CD8-positive, alpha-beta T cell (primary cell): ENCODE measurements at regions of chr20 and their contacts with region 1.

Region 1: DNA sequence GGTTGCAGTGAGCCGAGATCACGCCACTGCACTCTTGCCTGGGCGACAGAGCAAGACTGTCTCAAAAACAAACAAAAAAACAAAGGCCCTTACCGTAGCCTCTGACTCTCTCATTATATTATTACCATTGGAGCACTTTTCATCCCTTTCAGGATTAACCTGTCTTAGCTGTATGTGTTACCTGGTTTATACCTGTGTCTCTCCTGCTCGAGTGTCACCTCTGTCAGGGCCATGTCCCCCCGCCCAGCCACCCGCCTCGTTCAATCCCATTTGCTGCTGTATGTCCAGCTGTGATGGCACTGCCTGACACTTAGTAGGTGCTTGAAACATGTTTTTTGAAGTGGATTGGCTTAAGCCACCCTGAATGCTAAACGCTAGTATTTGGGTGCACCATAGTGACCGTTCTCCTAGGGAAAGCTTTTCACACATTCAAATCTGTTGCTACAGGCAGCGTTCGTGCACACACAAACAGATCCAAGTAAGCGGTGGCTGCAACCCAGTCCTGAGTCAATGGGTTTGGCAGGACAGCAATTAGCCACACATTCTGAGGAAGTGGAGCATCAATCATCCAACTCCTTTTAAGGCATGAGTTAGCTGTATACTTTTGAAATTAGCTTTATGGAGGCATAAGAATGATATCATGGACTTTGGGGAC is 98.9 kb upstream of the ZNF217 start:
- DNase-seq: peak in 1 of 9 experiments; percentile 22
- ATAC-seq: no peak
- H3K4me3 ChIP-seq: peak overlapping the region in 1 of 2 experiments; percentile 16
- H3K4me3 Mint-ChIP-seq: peak overlapping the region; percentile 71
- H3K27ac ChIP-seq: peak overlapping the region in 1 of 2 experiments; percentile 16
- H3K27ac Mint-ChIP-seq: peak overlapping the region; percentile 87
- H3K4me1 ChIP-seq: peaks cover 12% of the 10 kb centered on the region
- H3K4me1 Mint-ChIP-seq: peaks cover 34% of the 10 kb centered on the region
- H3K27me3 ChIP-seq: no peaks in the 10 kb centered on the region
- H3K27me3 Mint-ChIP-seq: no peaks in the 10 kb centered on the region
- CTCF ChIP-seq: no peak

Region 2: GRCh38 chr20:53734006-53734688 is 41.6 kb after region 1 on chr20:
- CTCF ChIA-PET with region 1: no interaction called
- POLR2A ChIA-PET with region 1: no interaction called
- intact Hi-C with region 1: loop called in 1 of 2 experiments (anchors 5 kb)
- DNase-seq: no peak
- ATAC-seq: no peak
- H3K4me3 ChIP-seq: no peak overlapping the region
- H3K4me3 Mint-ChIP-seq: no peak overlapping the region
- H3K27ac ChIP-seq: no peak overlapping the region
- H3K27ac Mint-ChIP-seq: no peak overlapping the region
- H3K4me1 ChIP-seq: peaks cover 19% of the 10 kb centered on the region
- H3K4me1 Mint-ChIP-seq: peaks cover 25% of the 10 kb centered on the region
- H3K27me3 ChIP-seq: no peaks in the 10 kb centered on the region
- H3K27me3 Mint-ChIP-seq: no peaks in the 10 kb centered on the region
- CTCF ChIP-seq: no peak

Region 3: DNA sequence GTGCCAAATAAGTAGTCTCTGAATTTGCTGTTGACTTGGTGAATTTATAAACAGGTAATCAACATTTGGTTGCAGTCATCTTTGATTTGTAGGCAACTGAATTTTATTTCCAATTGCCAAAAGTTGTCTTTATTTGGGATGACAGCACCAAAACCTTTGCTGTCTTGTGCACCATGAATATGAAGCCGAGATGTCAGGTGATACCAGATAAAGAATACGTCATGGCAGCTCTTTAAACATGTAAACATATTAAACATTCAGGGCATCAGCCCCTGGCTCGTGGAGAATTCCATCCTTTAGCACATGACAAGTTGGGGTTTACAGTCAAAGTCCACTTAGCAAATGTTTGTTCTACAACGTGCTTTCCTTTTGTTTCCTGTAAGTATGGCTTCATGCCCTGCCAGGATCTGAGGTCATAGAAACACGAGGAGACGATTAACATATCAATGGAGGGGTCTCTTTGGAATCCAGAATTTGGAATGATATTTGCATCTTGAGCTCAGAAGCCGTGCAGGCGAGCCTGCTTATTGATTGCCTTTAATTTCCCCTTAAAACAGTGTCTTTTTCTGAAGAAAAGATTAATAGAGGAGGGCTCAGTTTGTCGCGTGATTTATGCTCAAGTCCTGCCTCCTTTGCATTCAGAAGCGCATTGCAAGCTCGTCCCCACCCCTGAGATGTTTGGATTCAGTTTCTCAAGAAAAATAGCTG is 71.3 kb after region 1 on chr20:
- CTCF ChIA-PET with region 1: no interaction called
- POLR2A ChIA-PET with region 1: no interaction called
- intact Hi-C with region 1: no loop called
- DNase-seq: no peak
- ATAC-seq: no peak
- H3K4me3 ChIP-seq: no peak overlapping the region
- H3K4me3 Mint-ChIP-seq: no peak overlapping the region
- H3K27ac ChIP-seq: no peak overlapping the region
- H3K27ac Mint-ChIP-seq: no peak overlapping the region
- H3K4me1 ChIP-seq: peaks cover 7% of the 10 kb centered on the region
- H3K4me1 Mint-ChIP-seq: peaks cover 8% of the 10 kb centered on the region
- H3K27me3 ChIP-seq: no peaks in the 10 kb centered on the region
- H3K27me3 Mint-ChIP-seq: no peaks in the 10 kb centered on the region
- CTCF ChIP-seq: no peak